AG04449 (cell line): ENCODE measurements at regions of chr5 and their contacts with region 1.

Region 1: GRCh38 chr5:80686757-80687156 is 32.0 kb upstream of the DHFR start:
- DNase-seq: no peak
- H3K4me3 ChIP-seq: no peak overlapping the region
- CTCF ChIP-seq: no peak

Region 2: GRCh38 chr5:80503641-80504040 is 183.1 kb before region 1 on chr5:
- CTCF ChIA-PET with region 1: no interaction called
- POLR2A ChIA-PET with region 1: no interaction called
- DNase-seq: no peak
- H3K4me3 ChIP-seq: no peak overlapping the region
- CTCF ChIP-seq: no peak

Region 3: DNA sequence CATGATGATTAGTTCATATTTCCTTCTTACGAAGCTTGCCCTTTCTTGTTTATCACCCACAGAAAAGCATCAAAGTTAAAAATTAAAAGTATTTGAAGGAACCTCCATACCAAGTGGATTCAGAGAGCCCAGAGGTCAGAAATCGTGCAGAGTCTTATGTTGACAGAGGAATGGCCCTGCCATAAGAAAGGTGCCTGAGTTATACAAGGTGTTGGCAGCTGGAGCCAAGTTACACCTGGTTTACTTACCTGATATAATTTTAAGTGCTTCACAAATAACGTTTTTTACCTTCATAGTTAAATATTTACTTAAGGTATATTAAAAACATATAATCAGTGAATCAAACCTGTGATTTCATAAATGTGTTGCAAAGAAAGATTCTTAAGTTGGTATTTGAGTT is 10.3 kb after region 1 on chr5:
- CTCF ChIA-PET with region 1: interaction called, 13 read pairs
- POLR2A ChIA-PET with region 1: no interaction called
- DNase-seq: no peak
- H3K4me3 ChIP-seq: no peak overlapping the region
- CTCF ChIP-seq: no peak

Region 4: DNA sequence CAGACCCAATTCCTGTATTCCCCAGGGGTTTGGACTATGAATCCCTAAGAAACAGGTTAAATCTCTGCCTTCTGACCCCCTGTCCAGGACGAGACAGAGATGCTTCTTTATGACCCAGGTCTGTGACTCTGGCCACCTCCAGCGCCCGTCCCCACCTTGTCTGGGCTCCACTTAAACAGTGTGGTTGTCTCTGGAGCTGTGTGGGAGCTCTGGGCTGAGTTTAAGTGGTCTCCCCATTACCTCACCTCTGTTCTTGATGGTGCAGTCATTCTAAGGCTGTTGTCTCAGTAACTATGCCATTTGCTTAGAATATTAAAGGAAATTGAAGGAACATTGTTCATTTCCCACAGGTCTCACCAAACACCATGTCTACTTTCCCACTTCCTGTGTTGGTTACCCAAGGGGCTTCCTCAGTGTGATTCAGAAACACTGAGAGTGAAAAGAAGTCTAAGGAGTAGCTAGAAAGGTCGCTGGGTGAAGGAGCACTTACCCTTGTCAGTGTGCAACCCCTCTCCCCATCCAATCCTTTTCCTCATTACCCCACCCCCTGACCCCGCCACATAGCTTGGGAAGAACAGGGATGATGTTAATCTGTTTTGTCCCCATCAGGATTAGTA is 418.6 kb after region 1 on chr5:
- CTCF ChIA-PET with region 1: interaction called, 19 read pairs
- POLR2A ChIA-PET with region 1: no interaction called
- DNase-seq: no peak
- H3K4me3 ChIP-seq: no peak overlapping the region
- CTCF ChIP-seq: no peak

Region 5: GRCh38 chr5:81207009-81207408 is 520.3 kb after region 1 on chr5:
- CTCF ChIA-PET with region 1: interaction called, 10 read pairs
- POLR2A ChIA-PET with region 1: no interaction called
- DNase-seq: no peak
- H3K4me3 ChIP-seq: no peak overlapping the region
- CTCF ChIP-seq: peak; percentile 32